CD4-positive, alpha-beta T cell (primary cell): ENCODE measurements at regions of chr15 and their contacts with region 1.

Region 1: DNA sequence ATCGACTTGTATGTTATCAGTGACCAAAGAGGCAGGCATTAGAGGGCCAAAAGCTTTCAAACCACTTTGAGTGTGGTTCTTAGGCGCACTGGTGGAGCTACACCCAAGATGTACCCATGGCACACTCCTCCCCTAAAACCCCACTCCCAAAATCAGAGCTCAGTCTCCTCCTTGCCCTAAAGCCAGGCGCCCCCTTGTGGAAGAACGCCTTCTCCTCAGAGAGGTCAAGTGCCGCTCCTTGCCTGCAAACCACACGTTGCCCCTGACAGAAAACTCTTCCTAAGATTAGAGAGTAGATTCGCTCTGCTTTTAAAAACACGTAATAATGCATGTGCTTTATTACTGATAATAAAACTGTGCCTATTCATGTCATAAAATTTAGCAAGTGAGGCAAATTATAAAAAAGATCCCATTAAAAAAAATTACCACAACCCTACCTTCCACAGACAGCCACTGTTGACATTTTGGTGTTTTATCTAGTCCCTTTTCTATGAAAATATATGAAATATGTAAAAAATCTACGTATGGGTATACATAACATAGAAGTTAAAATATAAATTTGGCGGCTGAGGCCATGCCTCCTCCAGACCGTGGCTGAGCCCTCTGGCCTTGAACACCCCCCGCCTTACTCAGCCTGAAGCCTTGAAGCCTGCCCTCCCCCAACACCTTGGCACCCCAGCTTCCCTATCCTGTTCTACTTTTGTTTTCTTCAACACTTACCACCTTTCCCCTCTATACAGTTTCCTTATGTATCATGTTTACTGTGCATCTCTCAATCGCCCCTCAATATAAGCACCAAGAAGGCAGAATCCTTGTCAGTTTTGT is 33.5 kb downstream of the BCL2L10 start:
- DNase-seq: peak; percentile 75 to 93 (median 82)
- ATAC-seq: peak; percentile 91
- H3K4me3 ChIP-seq: no peak overlapping the region
- H3K4me3 Mint-ChIP-seq: no peak overlapping the region
- H3K27ac ChIP-seq: no peak overlapping the region
- H3K27ac Mint-ChIP-seq: no peak overlapping the region
- H3K4me1 ChIP-seq: peaks cover 11% of the 10 kb centered on the region
- H3K4me1 Mint-ChIP-seq: peaks cover 12% of the 10 kb centered on the region
- H3K27me3 ChIP-seq: no peaks in the 10 kb centered on the region
- H3K27me3 Mint-ChIP-seq: no peaks in the 10 kb centered on the region
- CTCF ChIP-seq: peak; percentile 83

Region 2: DNA sequence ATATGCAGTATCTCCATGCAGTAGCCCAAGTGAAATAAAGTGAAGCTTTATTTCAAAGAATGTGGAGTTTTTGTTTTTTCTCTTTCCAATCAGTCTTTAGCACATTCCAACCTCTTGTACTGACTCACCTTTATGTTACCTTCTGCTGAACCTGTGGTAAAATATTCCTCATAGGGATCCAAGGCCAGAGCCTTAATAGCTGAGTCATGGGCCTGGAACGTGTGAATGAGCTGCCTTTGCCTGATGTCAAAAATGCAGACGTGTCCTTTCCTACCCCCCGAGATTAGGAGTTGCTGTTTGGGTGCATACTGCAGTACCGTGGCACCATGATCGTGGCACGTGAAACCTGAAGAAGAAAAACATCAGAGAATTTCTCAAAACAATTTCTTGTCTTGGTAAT is 629.1 kb before region 1 on chr15:
- CTCF ChIA-PET with region 1: no interaction called
- POLR2A ChIA-PET with region 1: no interaction called
- intact Hi-C with region 1: no loop called
- DNase-seq: no peak
- ATAC-seq: no peak
- H3K4me3 ChIP-seq: no peak overlapping the region
- H3K4me3 Mint-ChIP-seq: no peak overlapping the region
- H3K27ac ChIP-seq: no peak overlapping the region
- H3K27ac Mint-ChIP-seq: no peak overlapping the region
- H3K4me1 ChIP-seq: no peaks in the 10 kb centered on the region
- H3K4me1 Mint-ChIP-seq: no peaks in the 10 kb centered on the region
- H3K27me3 ChIP-seq: no peaks in the 10 kb centered on the region
- H3K27me3 Mint-ChIP-seq: no peaks in the 10 kb centered on the region
- CTCF ChIP-seq: no peak

Region 3: DNA sequence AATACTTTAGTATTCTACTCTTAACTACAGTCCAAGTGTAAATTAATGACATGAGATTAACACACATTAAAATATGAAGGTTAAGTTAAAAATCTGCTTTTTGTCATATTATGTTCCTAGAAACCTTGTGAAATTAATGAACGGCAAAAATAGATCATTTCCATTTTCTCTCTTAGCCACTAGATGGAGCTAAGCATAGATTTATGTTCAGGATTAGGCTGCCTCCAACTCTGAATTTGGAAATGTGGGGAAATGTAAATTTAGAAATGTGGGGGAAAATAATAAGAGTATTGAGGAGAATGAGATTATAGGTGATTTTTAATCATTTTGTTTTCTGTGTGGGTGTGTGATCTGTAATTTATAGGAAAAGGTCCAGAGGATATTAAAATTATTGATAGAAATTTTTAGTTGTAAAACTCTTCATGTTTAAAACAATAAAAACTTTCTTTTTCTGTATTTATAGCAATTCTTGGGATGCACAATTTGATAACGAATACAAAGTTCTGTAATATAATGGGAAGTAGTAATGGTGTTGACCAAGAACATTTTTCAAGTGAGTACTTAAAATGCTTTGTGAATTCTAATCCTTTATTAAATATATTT is 190.4 kb before region 1 on chr15:
- CTCF ChIA-PET with region 1: no interaction called
- POLR2A ChIA-PET with region 1: interaction called, 3 read pairs
- intact Hi-C with region 1: loop called in 1 of 2 experiments (anchors 5 kb)
- DNase-seq: peak in 3 of 14 experiments; percentile 27 to 38 (median 33)
- ATAC-seq: peak; percentile 39
- H3K4me3 ChIP-seq: no peak overlapping the region
- H3K4me3 Mint-ChIP-seq: no peak overlapping the region
- H3K27ac ChIP-seq: no peak overlapping the region
- H3K27ac Mint-ChIP-seq: no peak overlapping the region
- H3K4me1 ChIP-seq: peaks cover 3% of the 10 kb centered on the region
- H3K4me1 Mint-ChIP-seq: peaks cover 5% of the 10 kb centered on the region
- H3K27me3 ChIP-seq: no peaks in the 10 kb centered on the region
- H3K27me3 Mint-ChIP-seq: no peaks in the 10 kb centered on the region
- CTCF ChIP-seq: peak; percentile 94

Region 4: DNA sequence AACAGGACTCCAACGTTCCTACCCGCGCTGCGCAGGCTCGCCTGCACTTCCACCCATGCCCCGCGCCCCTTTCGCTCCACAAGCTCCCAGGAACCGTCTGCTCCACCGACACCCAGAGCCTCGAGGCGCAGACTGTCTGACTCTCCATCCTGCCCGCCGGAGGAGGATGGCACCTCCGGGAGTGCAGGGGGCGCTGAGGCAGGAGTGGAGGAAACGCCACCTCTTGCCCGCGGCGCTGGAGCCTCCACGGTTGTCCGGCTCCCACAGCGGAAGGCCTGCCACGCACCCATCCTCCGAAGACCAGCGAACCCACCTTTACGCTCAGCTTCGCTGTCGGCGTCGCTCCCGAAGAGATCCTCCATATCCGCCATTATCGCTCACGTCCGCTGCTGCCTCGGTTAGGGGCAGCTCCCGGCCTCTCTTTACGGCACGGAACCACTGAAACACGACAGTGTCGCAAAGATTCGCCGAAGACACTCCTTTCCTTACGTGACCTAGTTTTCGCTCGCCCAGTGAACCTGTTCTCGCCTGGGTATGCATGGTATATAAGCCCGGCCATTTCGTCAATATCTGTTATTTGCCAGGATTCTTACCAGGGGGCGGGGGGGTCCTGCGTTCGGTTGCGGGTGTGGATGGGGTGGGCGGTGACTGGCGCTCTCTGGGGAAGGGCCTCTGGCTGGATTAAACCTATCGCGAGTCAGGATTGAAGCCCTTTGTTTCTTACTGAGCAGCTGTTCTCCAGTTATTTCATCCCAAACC is 107.5 kb before region 1 on chr15 and contains the start of gene LEO1:
- CTCF ChIA-PET with region 1: interaction called, 10 read pairs
- POLR2A ChIA-PET with region 1: interaction called, 7 read pairs
- intact Hi-C with region 1: no loop called
- DNase-seq: peak; percentile 73 to 97 (median 83)
- ATAC-seq: peak; percentile 92
- H3K4me3 ChIP-seq: peak within 1 kb of the TSS; percentile 98
- H3K4me3 Mint-ChIP-seq: peak within 1 kb of the TSS; percentile 95
- H3K27ac ChIP-seq: peak within 1 kb of the TSS; percentile 79 to 85
- H3K27ac Mint-ChIP-seq: peak within 1 kb of the TSS; percentile 92
- H3K4me1 ChIP-seq: peaks cover 19% of the 10 kb centered on the region
- H3K4me1 Mint-ChIP-seq: peaks cover 28% of the 10 kb centered on the region
- H3K27me3 ChIP-seq: no peaks in the 10 kb centered on the region
- H3K27me3 Mint-ChIP-seq: no peaks in the 10 kb centered on the region
- CTCF ChIP-seq: peak; percentile 47
- total RNA-seq, gene LEO1: 6.2 to 6.7 TPM

Region 5: GRCh38 chr15:52002351-52002750 is 76.7 kb before region 1 on chr15:
- CTCF ChIA-PET with region 1: interaction called, 5 read pairs
- POLR2A ChIA-PET with region 1: no interaction called
- intact Hi-C with region 1: loop called in 1 of 2 experiments (anchors 5 kb)
- DNase-seq: no peak
- ATAC-seq: no peak
- H3K4me3 ChIP-seq: no peak overlapping the region
- H3K4me3 Mint-ChIP-seq: no peak overlapping the region
- H3K27ac ChIP-seq: no peak overlapping the region
- H3K27ac Mint-ChIP-seq: no peak overlapping the region
- H3K4me1 ChIP-seq: peaks cover 8% of the 10 kb centered on the region
- H3K4me1 Mint-ChIP-seq: peaks cover 11% of the 10 kb centered on the region
- H3K27me3 ChIP-seq: no peaks in the 10 kb centered on the region
- H3K27me3 Mint-ChIP-seq: no peaks in the 10 kb centered on the region
- CTCF ChIP-seq: no peak